Adrenal gland (tissue), 19 donors: ENCODE measurements at regions of chr11 and their contacts with region 1.

Region 1: DNA sequence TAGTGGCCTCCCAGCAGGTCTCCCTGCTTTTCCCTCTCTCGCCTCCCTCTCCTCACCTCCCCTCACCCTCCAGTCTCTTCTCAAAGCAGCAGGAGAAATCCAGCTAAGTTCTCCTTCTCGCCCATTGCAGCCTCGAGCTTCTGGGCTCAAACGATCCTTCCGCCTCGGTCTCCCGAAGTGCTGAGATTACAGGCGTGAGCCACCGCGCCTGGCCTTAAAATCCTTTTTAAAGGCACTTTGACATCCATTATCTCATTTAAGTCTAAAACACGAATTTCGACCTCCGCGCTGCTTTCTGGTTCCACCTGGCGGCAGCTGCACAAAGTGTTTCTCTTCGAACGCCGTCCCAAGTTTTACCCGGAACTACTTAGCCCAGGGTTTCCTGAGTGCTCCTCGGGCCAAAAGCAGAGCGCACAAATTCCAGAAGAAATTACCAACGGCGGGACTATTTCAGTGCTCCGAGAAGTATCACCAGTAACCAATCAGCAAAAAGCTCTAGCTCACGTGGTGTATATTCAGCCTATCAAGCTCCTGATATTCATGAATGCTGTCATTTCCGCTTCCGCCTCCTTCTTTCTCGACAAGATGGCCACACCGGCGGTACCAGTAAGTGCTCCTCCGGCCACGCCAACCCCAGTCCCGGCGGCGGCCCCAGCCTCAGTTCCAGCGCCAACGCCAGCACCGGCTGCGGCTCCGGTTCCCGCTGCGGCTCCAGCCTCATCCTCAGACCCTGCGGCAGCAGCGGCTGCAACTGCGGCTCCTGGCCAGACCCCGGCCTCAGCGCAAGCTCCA is at the start of gene EIF3F:
- DNase-seq: peak; percentile 93 to 98 (median 95)
- H3K4me3 ChIP-seq: peak within 1 kb of the TSS in 3 of 4 donors; percentile 11 to 71 (median 60)
- H3K27ac ChIP-seq: peak within 1 kb of the TSS in 4 of 5 donors; percentile 9 to 83 (median 68)
- H3K4me1 ChIP-seq: peaks cover 19 to 23% of the 10 kb centered on the region in 2 donors
- H3K27me3 ChIP-seq: no peaks in the 10 kb centered on the region
- CTCF ChIP-seq: peak; percentile 81 to 95 (median 92)
- POLR2A ChIP-seq: peak; percentile 24 to 55
- total RNA-seq, gene EIF3F: 154 to 366 (median 221) TPM

Region 2: DNA sequence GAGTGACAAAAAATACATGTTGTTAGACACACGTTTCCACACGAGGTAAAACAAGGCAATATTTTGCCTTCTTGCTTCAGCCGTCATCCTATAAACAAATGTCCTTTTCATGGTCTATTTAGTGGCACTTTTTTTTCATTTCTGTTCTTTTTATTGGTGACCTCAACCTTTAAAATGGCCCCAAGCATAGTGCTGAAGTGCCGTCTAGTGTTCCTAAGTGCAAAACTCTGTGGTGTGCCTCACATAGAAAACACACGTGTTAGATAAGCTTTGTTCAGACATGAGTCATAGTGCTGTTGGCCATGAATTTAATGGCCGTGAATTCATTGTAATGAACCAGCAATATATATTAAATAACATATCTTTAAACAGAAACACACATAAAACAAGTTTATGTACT is 296.3 kb before region 1 on chr11:
- intact Hi-C with region 1: loop called in 1 of 2 experiments (anchors 10 kb)
- DNase-seq: no peak
- H3K4me3 ChIP-seq: no peak overlapping the region
- H3K27ac ChIP-seq: no peak overlapping the region
- H3K4me1 ChIP-seq: peaks cover 0 to 5% of the 10 kb centered on the region in 2 donors
- H3K27me3 ChIP-seq: peaks cover 6% of the 10 kb centered on the region
- CTCF ChIP-seq: no peak
- POLR2A ChIP-seq: no peak

Region 3: DNA sequence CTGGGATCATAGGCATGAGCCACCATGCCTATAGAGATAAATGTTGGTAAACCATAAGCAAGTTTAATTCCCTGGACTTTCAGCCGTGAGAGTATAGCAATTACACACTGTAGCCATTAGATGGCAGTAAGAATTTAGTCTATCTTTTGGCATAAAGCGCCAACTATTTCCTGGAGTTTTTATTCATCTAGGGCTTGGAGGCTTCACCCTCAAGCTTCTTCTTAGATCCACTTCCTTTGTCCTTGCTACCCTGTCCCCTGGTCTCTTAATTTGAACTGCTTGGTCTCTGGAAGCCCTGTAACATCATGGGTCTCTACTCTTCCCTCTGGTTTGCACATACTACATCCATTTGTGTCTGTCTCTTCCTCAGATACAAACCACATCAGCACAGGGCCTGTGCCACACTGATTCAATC is 94.1 kb before region 1 on chr11:
- intact Hi-C with region 1: loop called (anchors 5 kb)
- DNase-seq: peak in 1 of 7 donors; percentile 2
- H3K4me3 ChIP-seq: no peak overlapping the region
- H3K27ac ChIP-seq: no peak overlapping the region
- H3K4me1 ChIP-seq: no peaks in the 10 kb centered on the region
- H3K27me3 ChIP-seq: no peaks in the 10 kb centered on the region
- CTCF ChIP-seq: peak; percentile 63 to 79 (median 73)
- POLR2A ChIP-seq: no peak